Activated CD8-positive, alpha-beta T cell treated with anti-CD3 and anti-CD28 coated beads for 36 hours (primary cell): ENCODE measurements at regions of chr5 and their contacts with region 1.

Region 1: GRCh38 chr5:137778772-137779564 is 24.8 kb upstream of the HNRNPA0 start:
- DNase-seq: no peak
- ATAC-seq: no peak
- H3K4me3 Mint-ChIP-seq: no peak overlapping the region
- H3K27ac Mint-ChIP-seq: no peak overlapping the region
- H3K4me1 Mint-ChIP-seq: no peaks in the 10 kb centered on the region
- H3K27me3 Mint-ChIP-seq: no peaks in the 10 kb centered on the region
- CTCF ChIP-seq: peak; percentile 82

Region 2: DNA sequence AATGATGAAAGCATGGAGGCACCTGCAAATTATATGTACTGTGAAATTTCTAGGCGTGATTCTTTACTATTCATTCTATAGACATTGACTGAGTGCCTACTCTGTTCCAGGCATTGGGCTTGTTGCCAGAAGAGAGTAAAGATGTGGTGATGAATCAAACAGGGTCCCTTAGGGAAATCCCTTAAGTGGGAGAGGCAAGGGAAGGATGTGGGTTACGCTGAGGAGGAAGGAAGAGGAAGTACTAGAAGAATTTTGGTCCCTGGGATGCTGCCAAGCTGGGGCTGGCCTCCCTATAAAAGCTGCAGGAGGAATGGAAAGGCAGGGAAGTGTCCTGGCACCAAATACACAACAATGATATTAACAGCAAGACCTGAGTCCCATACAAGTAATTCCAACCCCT is 203.1 kb before region 1 on chr5:
- CTCF ChIA-PET with region 1: no interaction called
- POLR2A ChIA-PET with region 1: no interaction called
- intact Hi-C with region 1: no loop called
- DNase-seq: no peak
- ATAC-seq: no peak
- H3K4me3 Mint-ChIP-seq: no peak overlapping the region
- H3K27ac Mint-ChIP-seq: no peak overlapping the region
- H3K4me1 Mint-ChIP-seq: no peaks in the 10 kb centered on the region
- H3K27me3 Mint-ChIP-seq: peaks cover 16% of the 10 kb centered on the region
- CTCF ChIP-seq: no peak

Region 3: DNA sequence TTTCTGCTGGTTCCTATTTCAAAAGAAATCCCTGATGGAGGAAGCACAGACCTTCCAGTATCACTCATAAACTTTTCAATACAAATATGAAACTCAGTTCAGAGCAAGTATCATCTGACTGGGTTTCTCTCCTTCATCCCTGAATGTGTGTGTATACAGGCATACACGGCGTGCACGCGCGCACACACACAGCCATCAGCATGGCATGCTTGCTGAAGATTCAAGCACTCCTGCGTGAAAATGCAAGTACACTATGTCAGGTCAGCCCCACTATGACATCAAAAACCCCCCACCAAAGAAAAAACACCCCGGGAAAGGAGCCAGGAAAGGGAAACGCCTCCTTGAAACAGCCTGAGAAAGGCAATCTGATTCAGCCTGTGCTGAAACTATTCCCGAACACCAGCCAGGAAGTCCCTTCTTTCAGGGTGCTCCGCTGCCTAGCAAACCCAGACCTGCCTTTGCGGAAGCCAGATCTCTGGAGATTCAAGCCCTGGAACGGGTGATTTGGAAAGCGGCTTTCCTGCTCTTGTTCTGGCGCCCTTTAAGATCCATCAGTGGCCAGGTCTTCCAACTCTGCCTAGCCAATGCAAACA is 43.9 kb before region 1 on chr5:
- CTCF ChIA-PET with region 1: no interaction called
- POLR2A ChIA-PET with region 1: no interaction called
- intact Hi-C with region 1: no loop called
- DNase-seq: peak; percentile 44
- ATAC-seq: no peak
- H3K4me3 Mint-ChIP-seq: no peak overlapping the region
- H3K27ac Mint-ChIP-seq: no peak overlapping the region
- H3K4me1 Mint-ChIP-seq: peaks cover 55% of the 10 kb centered on the region
- H3K27me3 Mint-ChIP-seq: no peaks in the 10 kb centered on the region
- CTCF ChIP-seq: no peak

Region 4: GRCh38 chr5:137800700-137801411 is 21.9 kb after region 1 on chr5:
- CTCF ChIA-PET with region 1: interaction called, 25 read pairs
- POLR2A ChIA-PET with region 1: no interaction called
- intact Hi-C with region 1: no loop called
- DNase-seq: no peak
- ATAC-seq: no peak
- H3K4me3 Mint-ChIP-seq: no peak overlapping the region
- H3K27ac Mint-ChIP-seq: no peak overlapping the region
- H3K4me1 Mint-ChIP-seq: no peaks in the 10 kb centered on the region
- H3K27me3 Mint-ChIP-seq: no peaks in the 10 kb centered on the region
- CTCF ChIP-seq: no peak

Region 5: GRCh38 chr5:137822158-137822764 is 43.3 kb after region 1 on chr5:
- CTCF ChIA-PET with region 1: interaction called, 11 read pairs
- POLR2A ChIA-PET with region 1: no interaction called
- intact Hi-C with region 1: no loop called
- DNase-seq: peak; percentile 21
- ATAC-seq: no peak
- H3K4me3 Mint-ChIP-seq: no peak overlapping the region
- H3K27ac Mint-ChIP-seq: no peak overlapping the region
- H3K4me1 Mint-ChIP-seq: no peaks in the 10 kb centered on the region
- H3K27me3 Mint-ChIP-seq: no peaks in the 10 kb centered on the region
- CTCF ChIP-seq: no peak

Region 6: GRCh38 chr5:137888857-137889759 is 110.1 kb after region 1 on chr5 and contains the start of gene PKD2L2:
- CTCF ChIA-PET with region 1: interaction called, 15 read pairs
- POLR2A ChIA-PET with region 1: no interaction called
- intact Hi-C with region 1: no loop called
- DNase-seq: peak; percentile 87
- ATAC-seq: peak; percentile 100
- H3K4me3 Mint-ChIP-seq: peak within 1 kb of the TSS; percentile 80
- H3K27ac Mint-ChIP-seq: peak within 1 kb of the TSS; percentile 88
- H3K4me1 Mint-ChIP-seq: peaks cover 10% of the 10 kb centered on the region
- H3K27me3 Mint-ChIP-seq: no peaks in the 10 kb centered on the region
- CTCF ChIP-seq: no peak
- total RNA-seq, gene PKD2L2: not detected

Region 7: DNA sequence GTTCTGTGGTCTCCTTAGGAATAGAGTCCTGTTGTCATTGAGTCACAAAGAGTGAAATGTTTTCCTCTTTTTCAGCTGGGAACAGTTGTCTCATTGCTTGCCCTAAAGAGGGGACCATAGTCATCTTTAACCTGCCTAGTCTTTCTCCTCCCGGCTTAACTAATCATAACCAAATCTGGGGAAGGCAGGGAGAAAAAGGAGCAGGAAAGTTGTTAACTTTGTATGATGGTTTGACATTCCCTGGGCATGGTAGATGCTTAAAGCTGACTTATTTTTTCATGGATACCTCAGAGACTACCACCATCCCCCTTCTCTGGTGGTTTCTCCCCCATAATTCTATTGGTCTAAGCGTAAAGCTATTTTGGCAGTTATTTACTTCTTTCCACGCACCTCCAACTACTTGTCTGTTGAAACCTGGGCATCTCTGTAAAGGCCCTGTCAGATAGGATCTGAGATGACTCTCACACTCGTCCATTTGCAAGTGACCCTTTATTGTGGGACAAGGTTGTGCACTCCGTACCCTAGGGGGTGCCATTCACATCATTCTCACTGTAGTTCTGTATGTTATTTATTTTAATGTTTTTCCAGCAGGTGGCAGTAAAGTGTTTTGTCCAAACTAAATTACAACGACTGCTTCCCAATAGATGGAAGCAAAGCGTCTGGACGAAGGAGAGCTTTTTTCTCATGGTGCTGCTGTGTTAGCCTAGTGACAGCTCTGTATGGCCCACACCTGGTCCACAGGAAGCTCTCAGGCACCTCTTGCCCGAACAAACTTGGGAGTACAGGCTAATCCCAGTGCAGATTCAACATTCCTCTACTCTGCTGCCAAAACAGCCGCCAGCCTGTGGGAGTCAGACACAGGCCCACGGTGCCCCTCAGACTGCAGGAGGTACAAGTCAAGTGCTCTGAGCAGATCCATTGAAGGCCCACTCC is 256.9 kb after region 1 on chr5:
- CTCF ChIA-PET with region 1: interaction called, 36 read pairs
- POLR2A ChIA-PET with region 1: no interaction called
- intact Hi-C with region 1: no loop called
- DNase-seq: peak; percentile 81
- ATAC-seq: peak; percentile 67
- H3K4me3 Mint-ChIP-seq: no peak overlapping the region
- H3K27ac Mint-ChIP-seq: peak overlapping the region; percentile 6
- H3K4me1 Mint-ChIP-seq: peaks cover 27% of the 10 kb centered on the region
- H3K27me3 Mint-ChIP-seq: no peaks in the 10 kb centered on the region
- CTCF ChIP-seq: peak; percentile 88

Region 8: GRCh38 chr5:138128334-138128733 is 349.4 kb after region 1 on chr5:
- CTCF ChIA-PET with region 1: interaction called, 14 read pairs
- POLR2A ChIA-PET with region 1: no interaction called
- intact Hi-C with region 1: no loop called
- DNase-seq: no peak
- ATAC-seq: no peak
- H3K4me3 Mint-ChIP-seq: no peak overlapping the region
- H3K27ac Mint-ChIP-seq: no peak overlapping the region
- H3K4me1 Mint-ChIP-seq: no peaks in the 10 kb centered on the region
- H3K27me3 Mint-ChIP-seq: peaks cover 2% of the 10 kb centered on the region
- CTCF ChIP-seq: no peak

Region 9: DNA sequence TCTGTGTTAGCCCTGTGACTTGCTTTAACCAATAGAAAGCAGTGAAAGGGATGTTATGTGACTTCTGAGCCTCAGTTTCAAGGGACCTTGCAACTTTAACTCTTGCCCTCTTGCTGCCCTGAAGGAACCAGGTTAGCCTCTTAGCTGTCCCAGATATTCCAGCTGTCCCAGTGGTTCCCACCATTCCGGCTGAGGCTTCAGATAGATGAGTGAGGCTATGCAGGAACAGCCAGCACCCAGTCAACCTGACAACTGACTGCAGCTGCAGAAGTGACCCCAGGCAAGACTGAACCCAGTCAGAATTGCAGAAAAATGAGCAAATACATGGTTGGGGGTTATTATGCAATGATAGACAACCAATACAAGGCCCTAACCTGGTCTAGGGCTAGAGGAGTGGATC is 444.6 kb after region 1 on chr5:
- CTCF ChIA-PET with region 1: no interaction called
- POLR2A ChIA-PET with region 1: no interaction called
- intact Hi-C with region 1: no loop called
- DNase-seq: no peak
- ATAC-seq: no peak
- H3K4me3 Mint-ChIP-seq: no peak overlapping the region
- H3K27ac Mint-ChIP-seq: no peak overlapping the region
- H3K4me1 Mint-ChIP-seq: no peaks in the 10 kb centered on the region
- H3K27me3 Mint-ChIP-seq: peaks cover 11% of the 10 kb centered on the region
- CTCF ChIP-seq: no peak